ENCODE measurements at regions of chr13 and their contacts with region 1.

Region 1: GRCh38 chr13:99916366-99917103 is 55.0 kb downstream of the ZIC5 start:
- DNase-seq: peak; percentile 81
- CTCF ChIP-seq: peak; percentile 85

Region 2: DNA sequence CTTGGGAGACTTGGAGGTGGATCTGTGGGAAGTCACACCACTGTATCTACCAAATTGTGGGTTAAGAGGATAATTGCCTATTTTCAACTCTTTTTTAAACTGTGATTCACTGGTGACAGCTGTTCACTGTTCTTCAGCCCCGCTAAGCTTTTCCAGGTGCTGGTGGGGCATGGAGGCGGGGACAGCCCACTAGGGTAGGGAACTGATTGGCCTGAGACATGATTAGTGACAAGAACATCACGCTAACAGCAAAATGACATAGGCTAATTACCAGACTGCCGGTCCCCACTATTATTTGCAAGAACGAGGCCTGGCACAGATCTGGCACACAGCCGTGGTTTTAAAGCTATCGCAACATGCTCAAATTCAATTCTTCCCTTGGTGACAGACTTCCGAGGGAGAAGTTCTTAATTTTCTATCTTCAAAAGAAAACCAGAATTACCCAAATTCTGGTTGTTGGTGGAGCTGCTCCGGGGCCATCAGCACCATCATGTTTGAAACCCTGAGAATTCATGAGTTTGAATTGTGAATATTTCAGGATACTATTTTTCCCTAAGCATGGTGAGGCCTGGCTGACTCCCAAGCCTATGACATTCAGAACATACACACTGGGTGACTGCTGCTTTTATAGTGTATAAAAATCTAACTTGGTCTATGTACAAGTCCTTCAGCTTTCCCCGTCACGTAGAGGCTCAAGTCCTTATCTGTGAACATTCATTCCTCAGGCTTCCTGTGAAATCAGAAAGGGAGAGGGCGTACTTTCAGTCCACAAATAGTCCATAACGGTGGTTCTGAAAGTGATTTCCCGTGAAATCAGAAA is 956.5 kb before region 1 on chr13:
- in situ Hi-C with region 1: no loop called
- DNase-seq: no peak
- CTCF ChIP-seq: no peak

Region 3: DNA sequence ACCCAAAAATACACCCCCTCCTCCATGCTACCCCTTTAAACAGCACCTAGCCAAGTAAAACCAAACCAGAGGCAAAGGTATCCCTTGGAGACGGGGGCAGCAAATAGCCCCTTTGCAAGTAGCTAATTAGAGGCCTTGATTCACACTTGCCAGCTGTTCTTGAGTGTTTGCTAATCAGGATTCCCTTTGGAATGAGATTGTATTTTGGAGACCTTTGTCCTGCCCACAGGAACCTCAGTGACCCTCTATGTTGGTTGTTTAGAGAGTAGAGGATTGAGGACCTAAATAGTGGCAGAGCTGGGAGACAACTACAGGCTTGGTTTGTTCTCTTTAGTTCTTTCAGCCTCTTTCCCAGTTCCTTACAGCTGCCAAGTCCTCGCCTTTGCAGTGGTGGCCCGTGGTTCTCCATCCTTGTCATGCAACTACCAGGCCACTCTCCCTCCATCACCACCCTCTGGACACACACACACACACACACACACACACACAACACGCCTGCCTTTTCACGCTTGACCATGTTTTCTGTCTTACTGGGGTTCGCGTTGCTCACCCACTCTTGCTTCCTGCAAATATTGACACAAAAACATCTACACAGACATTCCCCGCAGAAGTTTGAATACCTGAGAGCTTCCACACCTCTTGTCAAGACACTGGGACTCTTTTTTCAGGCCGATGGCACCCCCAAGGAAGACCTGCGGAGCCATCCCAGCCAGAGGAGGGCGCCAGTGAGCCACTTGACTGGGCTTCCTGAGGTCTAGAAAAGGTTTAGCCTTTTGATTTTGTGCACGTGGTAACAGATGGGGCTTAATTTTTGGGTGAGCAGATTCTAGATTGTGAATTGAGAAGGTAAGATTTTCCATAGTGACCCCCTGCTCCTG is 529.4 kb before region 1 on chr13:
- in situ Hi-C with region 1: no loop called
- DNase-seq: peak; percentile 87
- CTCF ChIP-seq: peak; percentile 85

Region 4: DNA sequence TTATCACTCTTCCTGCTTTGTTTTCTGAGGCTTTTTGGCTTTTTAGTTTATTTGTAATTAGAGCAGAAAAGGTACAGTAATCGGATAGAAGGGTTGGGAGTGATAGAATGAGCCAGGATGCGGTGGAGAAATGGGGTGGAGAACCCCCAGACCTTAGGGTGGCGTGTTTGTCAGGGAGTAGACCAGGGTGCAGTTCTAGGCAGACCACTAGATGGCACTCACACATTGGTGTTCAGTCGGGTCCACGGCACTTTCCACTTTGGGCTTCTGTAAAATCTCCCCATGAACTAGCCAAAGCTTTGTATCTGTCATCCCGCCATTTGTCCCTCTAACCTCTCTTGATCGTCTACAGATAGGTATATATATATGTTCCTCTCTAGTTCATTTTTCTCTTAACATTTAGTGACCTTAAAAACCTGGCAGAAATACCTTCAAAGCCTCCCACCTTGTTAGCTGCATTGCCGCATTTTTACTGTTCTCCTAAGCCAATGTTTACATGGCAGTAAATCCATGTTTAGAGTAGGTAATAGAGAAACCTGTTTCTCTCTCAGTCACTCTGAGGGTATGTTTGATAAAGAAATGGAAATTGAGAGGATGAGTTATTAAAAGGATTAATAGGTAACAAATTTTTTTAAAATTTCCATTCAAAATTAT is 260.3 kb before region 1 on chr13:
- in situ Hi-C with region 1: loop called (anchors 25 kb)
- DNase-seq: peak; percentile 76
- CTCF ChIP-seq: peak; percentile 79

Region 5: GRCh38 chr13:100235311-100235901 is 318.9 kb after region 1 on chr13:
- in situ Hi-C with region 1: loop called (anchors 10 kb)
- DNase-seq: peak; percentile 42
- CTCF ChIP-seq: peak; percentile 33

Region 6: DNA sequence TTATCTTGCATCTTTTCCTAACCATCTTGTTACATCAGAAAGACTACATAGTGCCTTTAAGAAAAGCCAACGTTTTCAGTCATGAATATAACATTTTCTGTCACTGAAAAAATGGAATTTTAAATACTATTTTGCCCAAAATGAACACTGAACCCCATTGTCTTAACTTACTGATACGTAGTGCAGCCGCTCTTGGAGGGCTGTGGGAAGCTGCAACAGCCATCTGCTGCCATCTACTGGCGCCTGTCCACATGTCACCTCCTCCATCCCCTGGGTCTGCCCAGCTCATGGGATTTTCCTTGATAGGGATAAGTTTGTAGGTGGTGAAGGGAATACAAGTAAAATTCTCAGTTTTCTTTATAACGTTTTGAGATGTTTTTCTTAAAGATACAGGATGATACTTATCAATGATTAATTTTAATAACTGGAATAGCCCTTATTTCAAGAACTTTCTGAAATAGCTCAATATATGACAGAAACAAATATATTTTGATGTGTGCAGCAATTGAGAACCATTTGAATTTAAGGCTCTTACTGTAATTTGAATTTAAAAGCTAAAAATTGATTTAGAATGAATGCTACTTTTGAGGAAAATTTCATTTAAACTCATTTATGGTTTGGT is 598.4 kb after region 1 on chr13:
- in situ Hi-C with region 1: loop called (anchors 25 kb)
- DNase-seq: peak; percentile 88
- CTCF ChIP-seq: peak; percentile 90

Measured in GM13976 (cell line).